A549 (cell line): ENCODE measurements at regions of chr2 and their contacts with region 1.

Region 1: DNA sequence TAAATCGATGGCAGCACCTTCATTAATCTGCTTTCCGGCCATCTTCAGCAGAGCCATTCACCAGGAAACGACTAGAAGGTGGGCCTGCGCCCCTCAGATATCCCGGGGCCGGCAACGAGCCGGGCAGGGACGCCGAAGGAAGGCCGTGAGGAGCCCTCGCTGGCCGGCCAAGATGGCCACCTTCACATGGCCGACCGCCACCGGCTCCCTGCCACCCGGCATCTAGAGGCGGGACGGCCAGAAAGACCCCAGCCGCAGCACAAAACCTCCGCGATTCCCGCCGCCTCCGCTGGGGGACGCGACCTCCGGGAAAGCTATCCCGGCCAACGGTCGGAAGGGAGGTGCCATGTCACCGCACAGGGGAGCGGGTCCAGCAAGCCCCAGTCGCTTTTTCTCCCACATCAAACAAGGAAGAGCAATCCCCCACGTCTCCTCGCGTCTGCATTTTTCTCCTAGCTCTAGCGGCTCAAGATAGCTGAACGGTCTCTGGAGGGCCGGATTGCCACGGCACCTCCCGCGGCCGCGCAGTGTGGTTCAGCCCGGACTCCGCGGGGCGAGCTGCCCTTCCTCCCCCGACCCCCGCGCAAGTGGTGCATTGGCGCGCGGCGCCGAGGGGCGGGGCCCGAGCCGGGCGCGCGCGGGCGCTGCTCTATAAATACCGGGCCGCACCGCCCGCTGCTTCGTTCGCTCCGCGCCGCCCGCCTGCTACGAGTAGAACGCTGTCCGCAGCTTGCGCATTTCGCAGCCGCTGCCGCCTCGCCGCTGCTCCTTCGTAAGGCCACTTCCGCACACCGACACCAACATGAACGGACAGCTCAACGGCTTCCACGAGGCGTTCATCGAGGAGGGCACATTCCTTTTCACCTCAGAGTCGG is at the start of gene MAT2A:
- DNase-seq: peak; percentile 74 to 97
- ATAC-seq: peak; percentile 75 to 82
- H3K4me3 ChIP-seq: peak within 1 kb of the TSS; percentile 98
- H3K27ac ChIP-seq: peak within 1 kb of the TSS; percentile 98 to 100
- H3K4me1 ChIP-seq: peaks cover 47% of the 10 kb centered on the region
- CTCF ChIP-seq: peak; percentile 60
- EP300 ChIP-seq: no peak
- POLR2A ChIP-seq: peak; percentile 100
- RAD21 ChIP-seq: peak; percentile 56 to 63; a peak in 4 of 5 replicates
- polyA plus RNA-seq, gene MAT2A: 1,024 and 1,329 TPM in 2 replicates

Region 2: DNA sequence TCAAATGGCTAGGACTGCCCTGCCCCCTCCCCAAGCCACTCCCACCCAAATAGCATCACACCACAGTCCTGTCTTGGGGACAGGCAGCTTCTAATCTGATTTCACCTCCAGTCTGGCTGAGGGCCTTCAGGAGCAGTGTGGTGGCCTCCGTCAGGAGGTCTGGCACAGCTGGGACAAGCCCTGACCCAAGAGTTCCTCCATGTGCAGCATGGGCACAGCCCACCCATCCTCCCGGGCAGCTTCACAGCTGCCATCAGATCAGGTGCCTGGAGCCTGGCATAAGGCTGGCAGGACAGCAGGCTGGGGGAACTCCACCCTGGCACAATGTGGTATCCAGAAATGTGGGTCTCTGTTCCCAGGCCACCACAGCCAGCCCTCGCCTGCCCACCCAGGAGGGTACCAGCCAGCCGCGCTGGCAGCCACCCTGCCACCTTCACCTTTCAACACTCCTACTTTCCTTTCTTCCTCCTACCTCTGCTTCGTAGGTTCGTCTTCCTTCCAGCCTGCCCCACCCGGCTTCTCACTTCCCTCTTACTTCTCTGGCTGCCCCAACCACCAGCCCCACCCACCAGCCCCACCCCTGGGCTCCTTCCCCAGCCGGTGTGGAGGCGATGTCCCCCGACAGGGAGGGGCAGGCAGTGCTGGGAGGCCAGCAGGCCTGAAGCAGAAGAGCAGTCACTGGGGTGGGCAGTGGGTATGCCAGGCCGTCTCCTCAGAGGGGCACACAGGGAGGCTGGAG is 128.7 kb before region 1 on chr2 and contains the start of gene CAPG:
- CTCF ChIA-PET with region 1: interaction called, 1,185 read pairs
- POLR2A ChIA-PET with region 1: interaction called, 10 read pairs
- DNase-seq: peak in 1 of 2 experiments; percentile 55
- ATAC-seq: peak; percentile 31 to 59; a peak in 4 of 6 replicates
- H3K4me3 ChIP-seq: no peak within 1 kb of the TSS
- H3K27ac ChIP-seq: peak within 1 kb of the TSS; percentile 52 to 78
- H3K4me1 ChIP-seq: peaks cover 38% of the 10 kb centered on the region
- CTCF ChIP-seq: no peak
- EP300 ChIP-seq: no peak
- POLR2A ChIP-seq: peak; percentile 26
- RAD21 ChIP-seq: no peak
- polyA plus RNA-seq, gene CAPG: 81.0 and 94.6 TPM in 2 replicates

Region 3: GRCh38 chr2:85437488-85438284 is 101.0 kb before region 1 on chr2:
- CTCF ChIA-PET with region 1: interaction called, 1,185 read pairs
- POLR2A ChIA-PET with region 1: interaction called, 153 read pairs
- DNase-seq: peak; percentile 89
- ATAC-seq: peak; percentile 70 to 79
- H3K4me3 ChIP-seq: peak overlapping the region; percentile 33
- H3K27ac ChIP-seq: peak overlapping the region; percentile 91 to 95
- H3K4me1 ChIP-seq: peaks cover 61% of the 10 kb centered on the region
- CTCF ChIP-seq: no peak
- EP300 ChIP-seq: peak; percentile 61 to 78; a peak in 3 of 5 replicates
- POLR2A ChIP-seq: peak; percentile 40
- RAD21 ChIP-seq: peak in 1 of 2 experiments; percentile 57; a peak in 3 of 5 replicates

Region 4: GRCh38 chr2:85504778-85505323 is 33.9 kb before region 1 on chr2:
- CTCF ChIA-PET with region 1: interaction called, 23 read pairs
- POLR2A ChIA-PET with region 1: interaction called, 88 read pairs
- DNase-seq: peak; percentile 59 to 75
- ATAC-seq: peak; percentile 79 to 82
- H3K4me3 ChIP-seq: no peak overlapping the region
- H3K27ac ChIP-seq: peak overlapping the region; percentile 61 to 83
- H3K4me1 ChIP-seq: peaks cover 41% of the 10 kb centered on the region
- CTCF ChIP-seq: no peak; the same call in 2 of the 3 replicates
- EP300 ChIP-seq: no peak
- POLR2A ChIP-seq: no peak
- RAD21 ChIP-seq: 0 out of 5 replicates have a peak, but pooled peaks of 1 of the 2 experiments have one; percentile 14

Region 5: DNA sequence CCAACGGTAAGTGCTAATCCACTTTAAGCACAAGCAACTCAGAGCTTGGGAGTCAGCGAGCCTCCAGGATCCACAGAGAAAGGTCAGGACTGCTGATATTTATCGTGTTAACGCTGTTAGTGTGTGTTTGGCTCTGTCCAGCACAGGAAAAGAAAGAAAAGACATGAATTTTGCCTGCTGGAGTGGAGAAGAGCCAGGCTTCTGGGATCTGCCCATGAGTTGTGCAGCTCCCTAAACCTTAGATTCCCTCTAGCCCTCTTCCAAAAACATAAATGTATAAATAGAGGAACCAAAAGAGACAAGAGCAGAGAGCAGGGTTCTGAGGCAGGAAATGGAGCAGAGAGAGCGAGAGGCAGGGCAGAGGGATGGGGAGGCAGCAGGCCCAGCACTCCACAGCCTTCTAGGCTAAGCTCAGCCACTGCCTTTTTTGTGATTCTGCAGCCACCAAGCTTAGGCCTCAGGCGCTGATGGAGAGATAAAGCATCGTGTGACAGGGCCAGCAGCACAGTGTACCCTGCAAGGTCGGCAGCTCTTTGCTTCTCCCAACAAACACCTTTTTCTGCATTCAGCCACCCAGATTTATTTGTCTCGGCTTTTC is 14.3 kb before region 1 on chr2:
- CTCF ChIA-PET with region 1: interaction called, 145 read pairs
- POLR2A ChIA-PET with region 1: interaction called, 31 read pairs
- DNase-seq: no peak
- ATAC-seq: peak; percentile 66 to 77; a peak in 5 of 6 replicates
- H3K4me3 ChIP-seq: no peak overlapping the region
- H3K27ac ChIP-seq: peak overlapping the region; percentile 9 to 65; a peak in 4 of 6 replicates
- H3K4me1 ChIP-seq: peaks cover 23% of the 10 kb centered on the region
- CTCF ChIP-seq: no peak
- EP300 ChIP-seq: no peak
- POLR2A ChIP-seq: no peak
- RAD21 ChIP-seq: no peak

Region 6: DNA sequence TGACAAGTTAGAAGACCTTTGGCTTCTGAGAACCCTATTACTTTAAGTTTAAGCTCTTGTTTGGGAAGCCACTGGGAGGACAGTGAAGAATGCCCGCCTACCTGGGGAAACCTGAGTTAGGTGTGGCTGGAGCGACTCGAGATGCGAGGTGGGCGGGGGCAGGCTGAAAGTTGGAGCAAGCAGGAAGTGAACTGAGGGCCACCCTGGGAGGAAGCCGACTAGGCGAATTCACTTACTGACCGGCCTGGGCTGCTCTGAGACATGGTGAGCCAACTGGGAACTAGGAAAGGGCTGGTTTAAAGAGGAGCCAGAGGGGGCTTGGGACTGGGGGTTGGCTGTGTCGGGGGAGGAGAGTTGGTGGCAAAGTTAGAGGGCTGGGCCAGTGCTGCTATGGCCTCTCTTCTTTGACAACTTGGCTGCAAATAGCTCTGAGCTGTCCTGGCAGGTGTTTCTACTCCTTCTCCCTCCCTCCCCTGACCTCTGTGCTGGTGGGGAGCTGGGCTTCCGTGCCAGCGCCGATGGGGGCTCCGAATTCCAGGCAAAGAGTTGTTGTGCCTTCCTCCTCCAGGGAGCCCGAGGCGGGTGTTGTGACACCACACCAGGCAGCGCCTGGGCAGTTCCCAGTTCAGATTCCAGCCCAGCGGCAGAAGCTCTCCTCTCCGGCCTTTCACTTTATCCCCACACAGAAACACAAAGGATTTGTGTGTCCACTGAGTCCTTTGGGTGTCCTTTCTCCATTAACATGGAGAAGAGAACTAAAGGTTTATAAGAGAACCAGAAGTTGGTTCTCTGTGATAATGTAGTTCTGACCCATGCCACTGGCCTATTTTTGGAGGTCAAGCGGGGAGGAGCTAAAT is 38.9 kb after region 1 on chr2 and contains the start of gene VAMP8:
- CTCF ChIA-PET with region 1: no interaction called
- POLR2A ChIA-PET with region 1: no interaction called
- DNase-seq: peak in 1 of 2 experiments; percentile 40
- ATAC-seq: peak; percentile 60 to 79
- H3K4me3 ChIP-seq: peak within 1 kb of the TSS; percentile 29
- H3K27ac ChIP-seq: peak within 1 kb of the TSS; percentile 52 to 65
- H3K4me1 ChIP-seq: peaks cover 5% of the 10 kb centered on the region; the same call in 1 of the 3 replicates
- CTCF ChIP-seq: no peak
- EP300 ChIP-seq: no peak
- POLR2A ChIP-seq: no peak
- RAD21 ChIP-seq: no peak
- polyA plus RNA-seq, gene VAMP8: 38.3 and 41.1 TPM in 2 replicates

Region 7: DNA sequence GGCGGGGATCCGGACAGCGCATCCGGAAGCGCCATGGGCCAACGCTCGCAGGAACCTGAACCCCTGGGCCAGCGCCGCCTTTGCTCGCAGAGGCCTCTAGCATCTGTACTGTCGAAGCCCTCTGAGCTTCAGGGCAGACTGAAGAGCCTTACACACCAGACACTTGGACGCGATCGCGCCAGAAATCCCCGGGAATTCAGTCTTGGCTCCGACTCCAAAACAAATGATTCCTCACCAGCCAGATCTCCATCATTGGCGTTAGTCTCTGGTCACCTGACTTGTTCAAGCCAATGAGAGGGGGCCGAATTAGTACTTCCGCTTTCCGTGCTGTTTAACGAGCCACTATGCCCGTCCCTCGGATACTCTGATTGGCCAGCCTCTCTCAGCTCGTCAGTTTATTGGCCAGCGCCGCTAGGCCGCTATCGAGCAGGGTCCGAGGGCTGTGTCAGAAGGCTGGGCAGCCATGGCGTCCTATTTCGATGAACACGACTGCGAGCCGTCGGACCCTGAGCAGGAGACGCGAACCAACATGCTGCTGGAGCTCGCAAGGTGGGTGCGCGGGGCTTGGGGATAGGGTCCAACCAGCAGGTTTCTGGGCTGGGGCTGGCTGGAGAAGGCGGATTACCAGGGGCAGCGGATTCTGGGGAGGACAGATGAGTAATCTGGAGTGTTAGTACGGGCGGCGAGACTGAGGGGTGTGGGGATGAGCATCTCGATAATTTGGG is 56.7 kb after region 1 on chr2 and contains the start of gene RNF181:
- CTCF ChIA-PET with region 1: no interaction called
- POLR2A ChIA-PET with region 1: interaction called, 17 read pairs
- DNase-seq: peak; percentile 99 to 100
- ATAC-seq: peak; percentile 95 to 99
- H3K4me3 ChIP-seq: peak within 1 kb of the TSS; percentile 71
- H3K27ac ChIP-seq: peak within 1 kb of the TSS; percentile 82 to 91
- H3K4me1 ChIP-seq: peaks cover 15% of the 10 kb centered on the region
- CTCF ChIP-seq: no peak
- EP300 ChIP-seq: no peak
- POLR2A ChIP-seq: peak; percentile 86
- RAD21 ChIP-seq: no peak
- polyA plus RNA-seq, gene RNF181: 287 and 366 TPM in 2 replicates